ENCODE measurements at regions of chr9 and their contacts with region 1.

Region 1: GRCh38 chr9:109574068-109574882 is 76.2 kb upstream of the PTPN3 start:
- DNase-seq: peak; percentile 28
- ATAC-seq: no peak
- H3K4me3 Mint-ChIP-seq: no peak overlapping the region
- H3K27ac Mint-ChIP-seq: no peak overlapping the region
- H3K4me1 Mint-ChIP-seq: no peaks in the 10 kb centered on the region
- H3K27me3 Mint-ChIP-seq: peaks cover 3% of the 10 kb centered on the region
- CTCF ChIP-seq: peak; percentile 59

Region 2: DNA sequence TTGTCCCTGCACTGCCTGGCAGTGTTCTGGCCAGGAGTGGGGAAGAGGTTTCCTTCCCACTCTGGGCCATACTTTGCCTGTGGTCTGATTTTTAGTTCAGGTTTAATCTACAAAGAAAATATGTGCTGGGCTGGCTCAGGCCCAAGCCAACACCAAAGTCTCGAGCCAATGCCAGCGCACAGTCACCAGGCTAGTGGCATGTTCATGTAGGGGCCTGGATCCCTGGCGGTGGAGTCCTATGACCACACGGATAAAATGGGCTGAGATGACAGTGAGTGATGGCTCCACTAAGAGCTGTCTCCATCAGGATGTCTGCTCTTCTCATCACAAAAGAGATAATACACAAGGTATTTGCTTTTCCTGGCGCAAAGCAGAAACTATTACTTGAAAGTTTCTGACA is 16.7 kb after region 1 on chr9:
- CTCF ChIA-PET with region 1: no interaction called
- POLR2A ChIA-PET with region 1: no interaction called
- intact Hi-C with region 1: no loop called
- DNase-seq: no peak
- ATAC-seq: no peak
- H3K4me3 Mint-ChIP-seq: no peak overlapping the region
- H3K27ac Mint-ChIP-seq: no peak overlapping the region
- H3K4me1 Mint-ChIP-seq: no peaks in the 10 kb centered on the region
- H3K27me3 Mint-ChIP-seq: peaks cover 6% of the 10 kb centered on the region
- CTCF ChIP-seq: no peak

Region 3: GRCh38 chr9:109817846-109818472 is 243.7 kb after region 1 on chr9:
- CTCF ChIA-PET with region 1: interaction called, 26 read pairs
- POLR2A ChIA-PET with region 1: no interaction called
- intact Hi-C with region 1: loop called (anchors 10 kb)
- DNase-seq: peak; percentile 62
- ATAC-seq: no peak
- H3K4me3 Mint-ChIP-seq: no peak overlapping the region
- H3K27ac Mint-ChIP-seq: no peak overlapping the region
- H3K4me1 Mint-ChIP-seq: no peaks in the 10 kb centered on the region
- H3K27me3 Mint-ChIP-seq: peaks cover 6% of the 10 kb centered on the region
- CTCF ChIP-seq: peak; percentile 65

Measured in activated CD8-positive, alpha-beta T cell treated with anti-CD3 and anti-CD28 coated beads for 36 hours (primary cell).